Psoas muscle (tissue), 8 donors: ENCODE measurements at regions of chr11 and their contacts with region 1.

Region 1: DNA sequence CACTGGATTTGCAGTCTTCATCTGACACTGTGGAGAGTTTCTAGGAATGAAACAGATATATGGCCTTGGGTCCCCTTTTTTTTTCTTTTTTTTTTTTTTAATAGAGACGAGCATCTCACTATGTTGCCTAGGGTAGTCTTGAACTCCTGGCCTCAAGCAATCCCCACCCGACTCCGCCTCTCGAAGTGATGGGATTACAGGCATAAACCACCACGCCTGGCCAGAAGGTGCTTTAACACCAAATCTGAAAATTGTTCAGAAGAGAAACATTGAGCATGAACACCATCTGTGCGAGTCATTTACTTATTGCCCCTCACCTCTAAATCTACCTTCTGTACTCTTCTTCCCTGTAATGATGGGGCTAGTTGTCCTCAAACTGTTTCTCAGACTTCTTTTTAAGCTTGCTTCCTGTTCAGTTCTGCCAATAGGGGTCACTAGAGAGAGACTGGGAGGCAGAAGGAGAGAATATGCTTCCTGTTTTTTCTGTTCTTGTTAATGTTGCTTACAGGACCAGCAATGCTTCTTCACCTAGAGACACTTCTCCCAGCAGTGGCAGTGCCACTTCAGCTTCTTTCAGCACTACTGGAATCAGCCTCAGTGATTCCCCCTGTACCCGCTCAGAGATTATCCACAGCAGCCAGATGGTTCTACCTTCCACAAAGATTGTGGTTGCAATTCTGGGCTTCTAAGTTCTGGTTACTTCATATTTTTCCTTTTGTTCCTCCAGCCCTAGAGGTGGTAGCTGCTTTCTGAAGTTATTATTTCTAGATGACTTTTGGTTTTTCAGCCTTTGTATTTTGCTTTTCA is 20.8 kb upstream of the ZBED5 start:
- DNase-seq: no peak
- ATAC-seq: peak in 3 of 4 donors; percentile 71 to 82 (median 80)
- H3K4me3 ChIP-seq: no peak overlapping the region
- H3K27ac ChIP-seq: no peak overlapping the region
- H3K4me1 ChIP-seq: peaks cover 19% of the 10 kb centered on the region
- H3K27me3 ChIP-seq: no peaks in the 10 kb centered on the region
- CTCF ChIP-seq: peak; percentile 59

Region 2: GRCh38 chr11:10866893-10867331 is 11.7 kb before region 1 on chr11:
- intact Hi-C with region 1: loop called in 1 of 2 experiments (anchors 1 kb)
- DNase-seq: no peak
- ATAC-seq: peak in 3 of 4 donors; percentile 52 to 68 (median 68)
- H3K4me3 ChIP-seq: peak overlapping the region; percentile 17
- H3K27ac ChIP-seq: peak overlapping the region; percentile 60
- H3K4me1 ChIP-seq: peaks cover 34% of the 10 kb centered on the region
- H3K27me3 ChIP-seq: no peaks in the 10 kb centered on the region
- CTCF ChIP-seq: no peak

Region 3: GRCh38 chr11:11010624-11011127 is 132.1 kb after region 1 on chr11:
- intact Hi-C with region 1: no loop called
- DNase-seq: peak; percentile 21 to 54
- ATAC-seq: peak; percentile 75 to 89 (median 84)
- H3K4me3 ChIP-seq: peak overlapping the region; percentile 22
- H3K27ac ChIP-seq: no peak overlapping the region
- H3K4me1 ChIP-seq: no peaks in the 10 kb centered on the region
- H3K27me3 ChIP-seq: peaks cover 0 to 4% (median 0%) of the 10 kb centered on the region in 3 donors
- CTCF ChIP-seq: peak; percentile 30

Region 4: GRCh38 chr11:11349870-11350337 is 471.3 kb after region 1 on chr11:
- intact Hi-C with region 1: loop called in 1 of 2 experiments (anchors 2 kb)
- DNase-seq: no peak
- ATAC-seq: peak in 2 of 4 donors; percentile 29 to 42
- H3K4me3 ChIP-seq: no peak overlapping the region
- H3K27ac ChIP-seq: no peak overlapping the region
- H3K4me1 ChIP-seq: peaks cover 5% of the 10 kb centered on the region
- H3K27me3 ChIP-seq: no peaks in the 10 kb centered on the region
- CTCF ChIP-seq: no peak